Activated naive CD4-positive, alpha-beta T cell treated with anti-CD3 and anti-CD28 coated beads, Interleukin-2, amount 10 ng/mL, durations not matched to agents 7 days and 5 days (primary cell): ENCODE measurements at regions of chr12 and their contacts with region 1.

Region 1: DNA sequence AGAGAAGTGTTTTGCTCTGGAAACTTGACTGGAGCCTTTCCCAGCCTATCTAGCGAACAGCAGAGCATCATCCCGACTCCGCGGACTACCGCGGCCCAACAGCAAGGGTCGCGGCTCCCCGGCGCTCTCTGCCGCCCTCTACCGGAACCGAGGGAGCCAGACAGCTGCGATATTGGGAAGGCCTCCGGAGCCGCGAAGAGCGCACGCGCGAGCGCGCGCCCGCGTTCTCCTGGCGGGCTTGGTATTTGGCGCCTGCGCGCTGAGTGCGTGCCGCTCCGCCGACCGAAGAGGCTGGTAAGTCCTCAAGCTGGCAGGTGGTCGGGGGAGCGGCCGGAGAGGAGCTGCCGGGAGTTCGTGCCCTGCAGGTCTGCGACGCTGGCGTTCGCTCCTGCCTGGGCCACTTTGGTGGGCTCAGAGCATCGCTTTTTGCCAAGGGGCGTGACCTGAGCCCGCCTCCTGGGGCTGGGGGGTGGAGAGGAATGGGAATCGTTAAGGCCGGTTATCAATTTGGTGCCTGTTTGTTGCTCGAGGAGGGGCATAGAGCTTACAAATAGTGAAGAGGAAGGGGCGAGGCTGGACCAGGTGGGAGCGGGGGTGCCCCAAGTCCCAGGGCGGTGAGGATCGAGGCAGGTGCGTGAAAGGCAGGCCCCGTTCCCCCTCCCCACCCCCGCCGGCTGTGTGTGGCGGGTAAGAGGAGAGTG is at the start of gene TMEM106C:
- DNase-seq: peak; percentile 93
- H3K4me3 Mint-ChIP-seq: peak within 1 kb of the TSS; percentile 98
- H3K27ac Mint-ChIP-seq: peak within 1 kb of the TSS; percentile 87
- H3K4me1 Mint-ChIP-seq: peaks cover 40% of the 10 kb centered on the region
- H3K27me3 Mint-ChIP-seq: peaks cover 46% of the 10 kb centered on the region

Region 2: DNA sequence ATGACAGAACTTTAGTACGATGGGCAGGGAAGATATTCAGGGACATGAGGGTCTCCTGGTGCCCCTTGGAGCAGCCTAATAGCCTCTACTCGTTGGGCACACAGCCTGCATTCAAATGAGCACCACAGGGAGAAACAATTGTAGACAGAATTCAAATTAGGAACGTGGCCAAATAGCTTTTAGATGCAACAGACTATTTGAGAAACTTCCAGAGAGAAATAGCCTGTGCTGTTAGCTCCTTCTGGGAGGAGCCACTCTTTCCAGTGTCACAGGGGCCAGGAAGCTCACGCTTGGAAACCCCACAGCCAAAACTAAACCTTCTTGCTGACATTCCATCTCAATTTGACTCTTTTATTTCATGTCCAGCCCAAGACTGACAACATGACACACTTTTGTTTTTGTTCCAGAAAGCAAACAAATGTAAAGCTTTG is 372.1 kb before region 1 on chr12:
- CTCF ChIA-PET with region 1: no interaction called
- DNase-seq: no peak
- H3K4me3 Mint-ChIP-seq: no peak overlapping the region
- H3K27ac Mint-ChIP-seq: no peak overlapping the region
- H3K4me1 Mint-ChIP-seq: no peaks in the 10 kb centered on the region
- H3K27me3 Mint-ChIP-seq: no peaks in the 10 kb centered on the region

Region 3: DNA sequence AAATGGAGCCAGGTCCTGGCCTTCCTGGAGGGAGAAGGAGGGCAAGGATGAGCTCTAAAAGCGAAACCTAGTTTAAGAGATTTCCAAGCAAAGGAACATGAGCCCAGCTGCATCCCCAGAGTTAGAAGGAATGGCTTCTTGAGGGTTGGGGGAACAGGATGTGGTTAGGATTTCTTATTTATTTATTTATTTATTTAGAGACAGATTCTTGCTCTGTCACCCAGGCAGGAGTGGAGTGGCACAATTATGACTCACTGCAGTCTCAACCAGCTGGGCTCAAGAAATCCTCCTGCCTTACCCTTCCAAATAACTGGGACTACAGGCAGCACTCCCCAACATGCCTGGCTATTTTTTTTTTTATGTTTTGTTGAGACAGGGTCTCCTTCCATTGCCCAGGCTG is 25.4 kb before region 1 on chr12:
- CTCF ChIA-PET with region 1: no interaction called
- DNase-seq: no peak
- H3K4me3 Mint-ChIP-seq: no peak overlapping the region
- H3K27ac Mint-ChIP-seq: no peak overlapping the region
- H3K4me1 Mint-ChIP-seq: no peaks in the 10 kb centered on the region
- H3K27me3 Mint-ChIP-seq: peaks cover 46% of the 10 kb centered on the region

Region 4: GRCh38 chr12:47990351-47991105 is 27.0 kb after region 1 on chr12:
- CTCF ChIA-PET with region 1: interaction called, 15 read pairs
- DNase-seq: peak; percentile 83
- H3K4me3 Mint-ChIP-seq: no peak overlapping the region
- H3K27ac Mint-ChIP-seq: peak overlapping the region; percentile 63
- H3K4me1 Mint-ChIP-seq: peaks cover 29% of the 10 kb centered on the region
- H3K27me3 Mint-ChIP-seq: peaks cover 100% of the 10 kb centered on the region